ENCODE measurements at regions of chr20 and their contacts with region 1.

Region 1: GRCh38 chr20:57709931-57710799 is at the start of gene PMEPA1:
- DNase-seq: peak; percentile 95
- ATAC-seq: peak; percentile 91
- H3K4me3 Mint-ChIP-seq: peak within 1 kb of the TSS; percentile 79
- H3K27ac Mint-ChIP-seq: peak within 1 kb of the TSS; percentile 77
- H3K4me1 Mint-ChIP-seq: peaks cover 20% of the 10 kb centered on the region
- H3K27me3 Mint-ChIP-seq: peaks cover 6% of the 10 kb centered on the region
- total RNA-seq, gene PMEPA1: 1.6 to 1.8 TPM

Region 2: DNA sequence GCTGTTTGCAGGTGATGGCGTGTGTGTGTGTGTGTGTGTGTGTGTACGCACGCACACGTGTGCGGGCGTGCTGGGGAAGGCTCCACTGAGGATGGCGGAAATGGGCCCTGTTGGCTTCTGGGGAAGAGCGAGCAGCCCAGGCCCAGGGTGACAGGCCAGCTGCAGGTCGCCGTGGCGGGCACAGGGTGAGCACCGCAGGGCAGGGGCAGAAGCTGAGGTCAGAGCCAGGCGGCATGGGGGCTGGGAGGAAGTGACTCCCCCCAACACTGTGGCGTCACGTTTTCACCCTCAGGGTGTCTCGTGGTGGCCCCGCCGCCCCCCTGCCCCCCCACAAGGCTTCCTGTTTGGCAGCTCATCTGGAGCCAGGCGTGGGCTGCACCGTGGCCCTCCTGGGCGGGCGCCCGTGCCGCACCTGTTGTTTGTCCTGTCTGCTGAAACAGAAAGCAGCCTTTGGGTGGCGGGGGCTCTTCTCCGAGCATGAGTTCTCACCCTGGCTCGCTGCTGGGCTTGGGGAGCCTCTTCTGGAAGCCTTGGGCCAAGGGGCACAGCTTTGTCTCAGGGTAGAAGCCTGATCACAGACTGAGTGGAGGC is 311.8 kb before region 1 on chr20:
- CTCF ChIA-PET with region 1: no interaction called
- POLR2A ChIA-PET with region 1: no interaction called
- intact Hi-C with region 1: loop called (anchors 2 to 10 kb)
- DNase-seq: peak; percentile 93
- ATAC-seq: peak; percentile 69
- H3K4me3 Mint-ChIP-seq: peak overlapping the region; percentile 74
- H3K27ac Mint-ChIP-seq: peak overlapping the region; percentile 99
- H3K4me1 Mint-ChIP-seq: peaks cover 92% of the 10 kb centered on the region
- H3K27me3 Mint-ChIP-seq: no peaks in the 10 kb centered on the region

Region 3: GRCh38 chr20:57509722-57510164 is 200.4 kb before region 1 on chr20:
- CTCF ChIA-PET with region 1: no interaction called
- POLR2A ChIA-PET with region 1: no interaction called
- intact Hi-C with region 1: no loop called
- DNase-seq: peak; percentile 45
- ATAC-seq: peak; percentile 53
- H3K4me3 Mint-ChIP-seq: no peak overlapping the region
- H3K27ac Mint-ChIP-seq: no peak overlapping the region
- H3K4me1 Mint-ChIP-seq: no peaks in the 10 kb centered on the region
- H3K27me3 Mint-ChIP-seq: peaks cover 7% of the 10 kb centered on the region

Region 4: GRCh38 chr20:57628047-57628961 is 81.9 kb before region 1 on chr20:
- CTCF ChIA-PET with region 1: interaction called, 5 read pairs
- POLR2A ChIA-PET with region 1: interaction called, 10 read pairs
- intact Hi-C with region 1: loop called in 1 of 2 experiments (anchors 2 kb)
- DNase-seq: peak; percentile 72
- ATAC-seq: peak; percentile 65
- H3K4me3 Mint-ChIP-seq: peak overlapping the region; percentile 76
- H3K27ac Mint-ChIP-seq: peak overlapping the region; percentile 98
- H3K4me1 Mint-ChIP-seq: peaks cover 37% of the 10 kb centered on the region
- H3K27me3 Mint-ChIP-seq: no peaks in the 10 kb centered on the region

Region 5: DNA sequence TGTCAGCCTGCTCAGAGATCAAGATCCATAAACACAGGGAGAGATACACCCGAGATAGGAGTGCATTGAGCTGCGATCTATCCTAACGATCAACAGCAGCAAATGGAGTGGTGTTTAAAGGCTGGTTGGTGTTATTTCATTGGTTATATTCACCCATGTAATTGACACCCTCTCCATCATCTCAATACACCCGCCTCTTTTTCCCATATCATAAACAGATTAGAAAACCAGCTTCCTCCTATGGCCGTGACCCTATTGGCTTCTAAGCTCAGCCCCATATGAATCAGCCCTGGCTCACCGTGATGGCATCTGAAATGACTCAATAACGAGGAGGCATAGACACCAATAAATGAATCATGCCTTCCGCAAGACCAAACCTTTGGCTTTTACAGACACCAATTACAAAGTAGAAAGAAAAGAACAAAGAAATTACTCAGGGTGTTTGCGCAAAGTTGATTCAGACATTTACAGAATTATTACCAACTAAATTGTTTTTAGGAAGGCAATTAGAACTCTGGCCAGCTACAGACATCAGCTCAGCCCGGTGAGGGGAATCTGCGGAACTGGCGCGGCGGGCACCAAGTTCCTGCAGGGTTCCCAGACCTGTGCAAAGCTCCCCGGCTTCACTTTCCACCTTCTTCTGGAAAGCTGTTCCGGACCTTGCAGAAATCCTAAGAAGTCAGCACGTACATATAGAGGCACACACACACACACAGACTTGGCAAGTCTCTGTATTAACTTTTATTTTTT is 11.9 kb before region 1 on chr20:
- CTCF ChIA-PET with region 1: interaction called, 7 read pairs
- POLR2A ChIA-PET with region 1: interaction called, 10 read pairs
- intact Hi-C with region 1: loop called (anchors 1 kb)
- DNase-seq: peak; percentile 89
- ATAC-seq: peak; percentile 99
- H3K4me3 Mint-ChIP-seq: peak overlapping the region; percentile 33
- H3K27ac Mint-ChIP-seq: peak overlapping the region; percentile 77
- H3K4me1 Mint-ChIP-seq: peaks cover 40% of the 10 kb centered on the region
- H3K27me3 Mint-ChIP-seq: no peaks in the 10 kb centered on the region

Region 6: DNA sequence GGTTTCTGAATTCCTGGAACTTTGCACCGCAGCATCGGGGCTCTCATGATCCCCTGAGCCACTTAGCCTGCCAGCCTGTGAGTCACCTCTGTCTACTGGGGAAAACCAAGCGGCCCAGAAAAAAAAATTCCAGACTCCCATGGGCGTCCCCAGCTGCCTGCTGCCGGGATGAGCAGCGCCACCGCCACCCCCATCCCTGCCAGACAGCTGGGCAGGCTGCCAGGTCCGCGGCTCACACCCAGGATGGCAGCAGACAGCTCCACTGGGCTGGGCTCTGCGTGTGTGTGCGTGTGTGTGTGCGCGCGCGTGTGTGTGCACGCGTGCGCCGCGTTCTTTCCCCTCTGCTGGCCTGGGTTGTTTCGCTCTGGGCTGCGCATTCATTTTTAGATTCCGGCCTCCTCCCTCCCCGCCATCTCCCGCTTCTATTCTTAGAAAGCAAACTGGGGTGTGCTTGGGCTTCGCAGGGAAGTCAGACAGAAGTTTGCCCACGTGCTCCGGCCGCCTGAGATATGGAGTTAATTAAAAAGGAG is 38.5 kb after region 1 on chr20:
- CTCF ChIA-PET with region 1: no interaction called
- POLR2A ChIA-PET with region 1: no interaction called
- intact Hi-C with region 1: loop called in 1 of 2 experiments (anchors 1 kb)
- DNase-seq: peak; percentile 77
- ATAC-seq: peak; percentile 94
- H3K4me3 Mint-ChIP-seq: peak overlapping the region; percentile 48
- H3K27ac Mint-ChIP-seq: peak overlapping the region; percentile 31
- H3K4me1 Mint-ChIP-seq: peaks cover 15% of the 10 kb centered on the region
- H3K27me3 Mint-ChIP-seq: peaks cover 25% of the 10 kb centered on the region

Region 7: DNA sequence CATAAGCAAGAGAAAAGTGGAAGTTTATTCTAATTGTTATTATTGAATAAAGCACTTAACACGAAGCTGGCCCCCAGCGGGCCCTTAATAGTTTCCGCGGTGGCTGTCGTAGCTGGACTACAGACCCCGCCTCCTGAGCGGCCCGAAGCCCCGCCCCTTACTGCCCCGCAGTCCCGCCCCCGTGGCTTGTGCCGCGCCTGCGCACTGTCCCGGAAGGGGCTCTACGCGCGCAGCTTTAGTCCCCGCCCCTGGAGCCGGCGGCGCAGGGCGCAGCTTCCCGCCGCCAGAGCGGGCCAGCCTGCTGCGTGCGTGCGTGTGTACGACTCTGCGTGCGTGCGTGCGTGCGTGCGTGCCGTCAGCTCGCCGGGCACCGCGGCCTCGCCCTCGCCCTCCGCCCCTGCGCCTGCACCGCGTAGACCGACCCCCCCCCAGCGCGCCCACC is 678.7 kb after region 1 on chr20 and contains the start of gene VAPB:
- CTCF ChIA-PET with region 1: no interaction called
- POLR2A ChIA-PET with region 1: no interaction called
- intact Hi-C with region 1: loop called in 1 of 2 experiments (anchors 5 kb)
- DNase-seq: peak; percentile 98
- ATAC-seq: peak; percentile 99
- H3K4me3 Mint-ChIP-seq: peak within 1 kb of the TSS; percentile 100
- H3K27ac Mint-ChIP-seq: peak within 1 kb of the TSS; percentile 97
- H3K4me1 Mint-ChIP-seq: peaks cover 39% of the 10 kb centered on the region
- H3K27me3 Mint-ChIP-seq: peaks cover 2% of the 10 kb centered on the region
- total RNA-seq, gene VAPB: 43.9 to 54.5 TPM

Measured in activated CD4-positive, alpha-beta T cell treated with anti-CD3 and anti-CD28 coated beads for 36 hours (primary cell).